Posterior vena cava (tissue), 2 donors: ENCODE measurements at regions of chr11 and their contacts with region 1.

Region 1: DNA sequence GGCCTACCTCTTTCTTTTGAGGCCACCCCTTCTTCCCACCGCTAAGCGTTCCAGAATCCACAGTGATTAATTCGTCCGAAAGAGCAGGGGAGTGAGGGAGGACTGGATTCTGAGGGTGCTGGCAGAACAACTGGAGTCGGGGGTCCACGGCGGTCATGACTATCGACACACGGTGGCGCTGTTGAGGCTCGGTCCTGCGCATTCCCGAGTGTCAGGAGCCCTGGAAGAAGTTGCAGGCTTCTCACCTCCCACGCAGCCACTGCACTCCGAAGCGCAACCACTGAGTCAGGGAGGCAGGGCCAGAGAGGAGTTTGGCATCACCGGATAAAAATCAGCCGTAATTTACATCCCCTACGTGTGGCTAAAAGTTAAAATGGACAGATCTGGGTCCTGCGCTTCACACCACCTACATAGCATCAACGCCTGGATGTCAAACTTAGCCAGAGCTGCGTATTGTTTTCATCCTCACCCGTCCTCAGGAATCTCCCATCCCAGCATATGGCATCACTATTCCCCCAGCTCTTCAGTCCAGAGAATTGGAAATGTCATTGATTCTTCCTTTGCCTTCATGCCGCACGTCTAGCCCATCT is 10.7 kb upstream of the CTSF start:
- DNase-seq: peak; percentile 94

Region 2: DNA sequence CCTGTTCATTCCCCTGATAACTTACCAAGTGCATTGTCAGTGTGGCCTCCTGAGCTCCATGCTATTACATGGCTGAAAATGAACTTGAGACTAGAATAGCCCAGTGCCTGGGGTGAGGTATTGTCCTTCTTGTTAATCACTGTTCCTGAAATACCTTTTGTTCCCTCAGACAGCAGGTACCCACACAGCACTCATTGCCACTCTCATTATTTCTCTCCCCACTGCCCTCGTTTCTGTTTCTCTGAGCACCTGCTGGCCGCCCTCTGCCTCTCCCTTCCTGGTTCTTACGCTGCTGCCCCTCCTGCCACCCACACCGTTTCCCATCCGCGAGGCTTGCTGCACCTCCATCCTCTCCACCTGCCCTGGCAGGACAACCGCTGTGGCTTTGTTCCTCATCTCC is 347.6 kb before region 1 on chr11:
- intact Hi-C with region 1: no loop called
- DNase-seq: no peak

Region 3: GRCh38 chr11:66677599-66678375 is 98.7 kb after region 1 on chr11 and contains the start of gene RBM4B:
- intact Hi-C with region 1: loop called (anchors 2 kb)
- DNase-seq: peak; percentile 99
- total RNA-seq, gene RBM4B: 9.0 to 10.2 TPM

Region 4: DNA sequence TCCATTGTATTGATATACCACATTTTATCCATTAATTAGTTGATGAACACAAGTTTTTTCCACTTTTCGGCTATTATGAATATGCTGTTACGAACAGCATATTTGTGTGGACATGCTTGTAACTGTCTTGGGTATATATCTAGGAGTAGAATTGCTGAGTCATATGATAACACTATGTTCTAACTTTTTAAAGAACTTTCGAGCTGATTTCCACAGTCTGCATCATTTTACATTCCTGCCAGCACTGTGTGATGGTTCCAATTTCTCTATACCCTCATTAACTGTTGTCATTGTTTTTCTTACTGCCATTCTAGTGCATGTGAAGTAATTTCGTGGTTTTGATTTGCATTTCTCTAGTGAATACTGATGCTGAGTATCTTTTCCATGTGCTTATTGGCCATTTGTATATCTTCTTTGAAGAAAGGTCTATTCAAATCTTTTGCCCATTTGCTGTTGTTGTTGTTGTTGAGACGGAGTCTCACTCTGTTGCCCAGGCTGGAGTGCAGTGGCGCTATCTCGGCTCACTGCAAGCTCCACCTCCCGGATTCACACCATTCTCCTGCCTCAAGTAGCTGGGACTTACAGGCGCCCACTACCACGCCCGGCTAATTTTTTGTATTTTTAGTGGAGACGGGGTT is 256.8 kb after region 1 on chr11:
- intact Hi-C with region 1: loop called in 1 of 2 experiments (anchors 10 kb)
- DNase-seq: no peak